Caco-2 (cell line): ENCODE measurements at regions of chr22 and their contacts with region 1.

Region 1: GRCh38 chr22:50267591-50268390 is 2.4 kb downstream of the MAPK11 start:
- DNase-seq: peak; percentile 63 to 64
- H3K4me3 ChIP-seq: peak overlapping the region; percentile 10; the same call in 1 of the 2 replicates
- H3K4me3 Mint-ChIP-seq: peak overlapping the region; percentile 38
- H3K27ac Mint-ChIP-seq: no peak overlapping the region
- H3K4me1 ChIP-seq: peaks cover 16% of the 10 kb centered on the region
- H3K4me1 Mint-ChIP-seq: no peaks in the 10 kb centered on the region
- H3K27me3 ChIP-seq: no peaks in the 10 kb centered on the region
- H3K27me3 Mint-ChIP-seq: no peaks in the 10 kb centered on the region
- CTCF ChIP-seq: peak in 1 of 2 experiments; percentile 11

Region 2: GRCh38 chr22:50209893-50210292 is 57.9 kb before region 1 on chr22:
- CTCF ChIA-PET with region 1: no interaction called
- POLR2A ChIA-PET with region 1: no interaction called
- intact Hi-C with region 1: no loop called
- DNase-seq: peak in 1 of 2 experiments; percentile 67
- H3K4me3 ChIP-seq: no peak overlapping the region
- H3K4me3 Mint-ChIP-seq: no peak overlapping the region
- H3K27ac Mint-ChIP-seq: peak overlapping the region; percentile 55
- H3K4me1 ChIP-seq: no peaks in the 10 kb centered on the region
- H3K4me1 Mint-ChIP-seq: peaks cover 10% of the 10 kb centered on the region
- H3K27me3 ChIP-seq: no peaks in the 10 kb centered on the region
- H3K27me3 Mint-ChIP-seq: no peaks in the 10 kb centered on the region
- CTCF ChIP-seq: peak; percentile 82 to 86

Region 3: DNA sequence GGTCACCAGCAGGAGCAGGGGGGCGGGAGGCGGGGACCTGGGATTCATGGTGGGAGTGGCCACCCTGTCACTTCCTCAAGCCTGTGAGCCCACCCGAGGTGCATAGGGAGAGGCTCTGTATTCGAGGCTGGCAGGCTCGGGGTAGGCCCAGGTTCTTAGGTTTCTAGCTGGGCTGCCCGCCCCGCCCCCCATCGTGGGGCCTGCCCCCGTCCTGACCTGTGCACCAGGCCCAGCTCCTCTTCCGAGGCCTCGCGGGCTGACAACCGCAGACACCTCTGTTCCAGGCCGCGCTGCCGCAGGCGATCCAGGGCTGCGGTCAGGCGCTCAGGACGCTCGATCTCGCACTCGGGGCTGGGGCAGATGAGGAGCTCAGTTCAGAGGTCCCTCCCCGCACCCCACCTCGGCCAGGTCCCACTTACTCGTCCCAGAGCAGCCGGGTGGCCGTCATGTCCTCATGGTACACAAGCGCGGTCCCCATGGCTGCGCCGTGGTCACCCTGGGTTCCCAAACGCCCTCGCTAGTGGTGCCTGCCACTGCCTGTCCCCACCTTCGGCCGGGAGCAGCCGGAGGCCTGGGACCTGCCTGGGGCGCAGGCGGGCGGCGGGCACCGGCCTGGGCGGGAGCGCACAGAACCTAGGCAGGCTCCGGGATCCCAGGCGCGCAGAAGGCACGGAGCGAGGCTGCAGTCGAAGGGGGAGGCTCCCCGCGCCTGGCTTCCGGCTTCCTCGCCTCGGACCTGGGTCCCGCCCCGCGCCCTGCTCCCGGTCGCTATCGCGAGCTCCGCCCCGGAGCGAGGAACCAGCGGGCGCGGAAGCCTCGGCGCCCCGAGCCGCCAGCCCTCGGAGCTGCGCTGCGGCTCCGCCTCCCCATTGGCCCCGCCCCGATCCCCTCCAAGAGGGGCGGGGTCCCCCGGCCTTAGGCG is 17.0 kb before region 1 on chr22 and contains the start of gene HDAC10:
- CTCF ChIA-PET with region 1: interaction called, 10 read pairs
- POLR2A ChIA-PET with region 1: interaction called, 3 read pairs
- intact Hi-C with region 1: no loop called
- DNase-seq: peak; percentile 84 to 91
- H3K4me3 ChIP-seq: peak within 1 kb of the TSS; percentile 99
- H3K4me3 Mint-ChIP-seq: peak within 1 kb of the TSS; percentile 76
- H3K27ac Mint-ChIP-seq: peak within 1 kb of the TSS; percentile 32
- H3K4me1 ChIP-seq: peaks cover 22% of the 10 kb centered on the region
- H3K4me1 Mint-ChIP-seq: no peaks in the 10 kb centered on the region
- H3K27me3 ChIP-seq: no peaks in the 10 kb centered on the region
- H3K27me3 Mint-ChIP-seq: no peaks in the 10 kb centered on the region
- CTCF ChIP-seq: no peak
- total RNA-seq, gene HDAC10: 61.3 and 63.5 TPM in 2 replicates

Region 4: DNA sequence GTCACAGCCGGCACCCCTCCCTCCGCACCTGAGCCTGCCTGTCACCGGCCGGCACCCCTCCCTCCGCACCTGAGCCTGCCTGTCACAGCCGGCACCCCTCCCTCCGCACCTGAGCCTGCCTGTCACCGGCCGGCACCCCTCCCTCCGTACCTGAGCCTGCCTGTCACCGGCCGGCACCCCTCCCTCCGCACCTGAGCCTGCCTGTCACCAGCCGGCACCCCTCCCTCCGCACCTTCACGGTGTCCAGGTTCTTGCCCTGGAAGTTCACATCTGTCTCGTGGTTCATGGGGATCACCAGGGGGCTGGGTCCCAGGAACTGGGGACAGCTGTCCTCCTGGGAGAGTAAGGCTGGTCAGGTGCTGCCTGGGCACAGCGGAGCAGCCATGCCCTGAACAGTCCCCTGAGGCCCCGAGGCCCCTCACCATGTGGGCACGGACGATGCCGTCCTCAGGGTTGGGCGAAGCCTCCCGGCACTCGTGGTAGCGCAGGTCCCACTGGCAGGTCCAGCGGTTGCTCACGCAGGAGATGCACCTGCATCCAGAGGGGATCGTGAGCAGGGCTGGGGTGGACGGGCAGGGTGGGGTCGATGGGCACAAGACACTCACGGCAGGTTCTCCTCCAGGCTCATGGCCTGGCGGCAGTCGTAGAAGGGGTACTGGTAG is 17.9 kb after region 1 on chr22:
- CTCF ChIA-PET with region 1: no interaction called
- POLR2A ChIA-PET with region 1: no interaction called
- intact Hi-C with region 1: no loop called
- DNase-seq: no peak
- H3K4me3 ChIP-seq: no peak overlapping the region
- H3K4me3 Mint-ChIP-seq: no peak overlapping the region
- H3K27ac Mint-ChIP-seq: no peak overlapping the region
- H3K4me1 ChIP-seq: peaks cover 18% of the 10 kb centered on the region
- H3K4me1 Mint-ChIP-seq: no peaks in the 10 kb centered on the region
- H3K27me3 ChIP-seq: no peaks in the 10 kb centered on the region
- H3K27me3 Mint-ChIP-seq: no peaks in the 10 kb centered on the region
- CTCF ChIP-seq: no peak